HEK293 (cell line): ENCODE measurements at regions of chr10 and their contacts with region 1.

Region 1: GRCh38 chr10:58177362-58177947 is 90.2 kb downstream of the IPMK start:
- H3K4me3 ChIP-seq: no peak overlapping the region
- H3K27ac ChIP-seq: no peak overlapping the region
- H3K4me1 ChIP-seq: no peaks in the 10 kb centered on the region
- CTCF ChIP-seq: no peak; the same call in 1 of the 2 replicates

Region 2: DNA sequence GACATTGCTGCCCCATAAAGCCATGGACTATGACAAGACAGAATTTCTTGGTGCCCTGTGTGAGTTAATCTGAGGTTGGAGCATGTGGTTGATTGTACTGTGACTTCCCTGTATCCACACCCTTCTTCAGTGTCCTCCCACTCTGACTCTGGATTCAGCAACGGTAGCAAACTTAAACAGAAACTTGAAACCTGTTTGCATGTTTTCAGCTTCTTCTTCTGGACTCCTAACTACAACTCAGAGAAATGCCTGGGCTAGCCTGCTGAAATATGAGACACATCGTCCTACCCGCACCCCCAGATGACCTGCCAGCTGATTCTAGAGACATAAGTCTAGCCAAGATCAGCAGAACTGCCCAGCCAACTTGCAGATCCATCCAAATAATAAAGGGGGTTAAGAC is 11.8 kb after region 1 on chr10:
- CTCF ChIA-PET with region 1: interaction called, 10 read pairs
- POLR2A ChIA-PET with region 1: no interaction called
- H3K4me3 ChIP-seq: no peak overlapping the region
- H3K27ac ChIP-seq: no peak overlapping the region
- H3K4me1 ChIP-seq: peaks cover 2% of the 10 kb centered on the region; the same call in 1 of the 2 replicates
- CTCF ChIP-seq: no peak

Region 3: DNA sequence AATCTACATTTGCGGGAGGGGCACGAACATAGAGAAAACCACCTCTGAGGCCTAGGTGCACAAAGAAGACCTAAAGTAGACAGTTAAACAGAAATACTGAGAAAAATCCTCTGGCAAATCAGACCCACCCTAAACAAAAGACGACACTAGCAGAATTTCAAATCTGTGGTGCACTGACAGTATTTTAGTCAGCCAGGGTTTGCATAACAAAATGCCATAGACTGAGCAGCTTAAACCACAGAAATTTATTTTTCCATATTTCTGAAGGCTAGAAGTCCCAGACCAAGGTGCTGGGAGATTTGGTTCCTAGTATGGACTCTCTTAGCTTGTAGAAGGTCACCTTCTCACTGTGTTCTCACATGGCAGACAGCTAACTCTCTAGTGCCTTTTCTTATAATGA is 63.9 kb after region 1 on chr10:
- CTCF ChIA-PET with region 1: no interaction called
- POLR2A ChIA-PET with region 1: no interaction called
- H3K4me3 ChIP-seq: no peak overlapping the region
- H3K27ac ChIP-seq: no peak overlapping the region
- H3K4me1 ChIP-seq: no peaks in the 10 kb centered on the region; the same call in 1 of the 2 replicates
- CTCF ChIP-seq: no peak

Region 4: DNA sequence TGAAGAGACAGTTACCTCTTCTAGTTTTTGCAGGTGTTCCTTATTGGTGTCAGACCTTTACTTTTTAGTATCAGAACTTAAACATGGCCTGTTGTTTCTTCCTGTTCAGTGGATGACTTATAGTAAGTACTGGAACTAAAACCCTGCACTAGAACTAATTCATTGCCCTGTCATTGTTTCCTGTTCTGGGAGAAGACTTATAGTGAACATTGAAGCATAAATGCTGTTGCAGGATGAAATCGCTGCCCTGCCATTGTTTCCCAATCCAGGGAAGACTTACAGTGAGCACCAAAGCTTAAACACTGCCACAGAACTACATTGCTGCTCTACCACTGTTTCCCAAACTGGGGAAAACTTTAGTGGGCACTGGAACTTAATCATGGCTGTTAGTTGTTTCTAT is 77.2 kb after region 1 on chr10:
- CTCF ChIA-PET with region 1: no interaction called
- POLR2A ChIA-PET with region 1: no interaction called
- H3K4me3 ChIP-seq: no peak overlapping the region
- H3K27ac ChIP-seq: no peak overlapping the region
- H3K4me1 ChIP-seq: no peaks in the 10 kb centered on the region
- CTCF ChIP-seq: no peak

Region 5: DNA sequence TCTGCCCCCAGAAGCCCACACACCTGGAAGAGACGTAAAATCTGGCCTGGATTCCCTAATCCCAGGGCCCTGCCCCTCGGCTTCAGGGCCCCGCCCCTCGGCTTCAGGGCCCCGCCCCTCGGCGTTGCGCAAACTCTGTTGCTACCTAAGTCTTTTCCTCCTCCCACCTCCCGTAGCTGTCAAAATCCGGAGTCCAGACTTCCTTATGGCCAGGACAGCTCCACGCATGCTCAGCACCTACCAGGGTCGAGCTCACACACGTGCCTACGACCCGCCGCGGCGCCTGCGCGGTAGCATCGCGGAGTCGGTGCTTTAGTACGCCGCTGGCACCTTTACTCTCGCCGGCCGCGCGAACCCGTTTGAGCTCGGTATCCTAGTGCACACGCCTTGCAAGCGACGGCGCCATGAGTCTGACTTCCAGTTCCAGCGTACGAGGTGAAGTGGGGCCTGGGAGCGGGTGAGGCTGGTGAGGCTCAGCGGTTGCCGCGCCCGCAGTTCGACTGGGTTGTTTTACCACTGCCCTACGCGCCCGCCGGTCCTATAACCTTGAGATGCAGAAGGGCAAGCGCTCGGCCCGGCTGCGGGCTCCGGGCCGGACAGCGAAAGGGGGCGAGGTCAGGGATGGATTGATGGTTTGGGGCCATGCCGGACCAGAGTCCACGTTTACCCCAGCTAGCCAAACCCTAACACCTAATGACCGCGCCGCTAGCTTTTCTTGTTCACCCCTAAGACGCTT is 91.6 kb after region 1 on chr10 and contains the start of gene CISD1:
- CTCF ChIA-PET with region 1: interaction called, 10 read pairs
- POLR2A ChIA-PET with region 1: interaction called, 4 read pairs
- H3K4me3 ChIP-seq: peak within 1 kb of the TSS; percentile 64
- H3K27ac ChIP-seq: peak within 1 kb of the TSS; percentile 94
- H3K4me1 ChIP-seq: peaks cover 5% of the 10 kb centered on the region; the same call in 1 of the 2 replicates
- CTCF ChIP-seq: no peak

Region 6: DNA sequence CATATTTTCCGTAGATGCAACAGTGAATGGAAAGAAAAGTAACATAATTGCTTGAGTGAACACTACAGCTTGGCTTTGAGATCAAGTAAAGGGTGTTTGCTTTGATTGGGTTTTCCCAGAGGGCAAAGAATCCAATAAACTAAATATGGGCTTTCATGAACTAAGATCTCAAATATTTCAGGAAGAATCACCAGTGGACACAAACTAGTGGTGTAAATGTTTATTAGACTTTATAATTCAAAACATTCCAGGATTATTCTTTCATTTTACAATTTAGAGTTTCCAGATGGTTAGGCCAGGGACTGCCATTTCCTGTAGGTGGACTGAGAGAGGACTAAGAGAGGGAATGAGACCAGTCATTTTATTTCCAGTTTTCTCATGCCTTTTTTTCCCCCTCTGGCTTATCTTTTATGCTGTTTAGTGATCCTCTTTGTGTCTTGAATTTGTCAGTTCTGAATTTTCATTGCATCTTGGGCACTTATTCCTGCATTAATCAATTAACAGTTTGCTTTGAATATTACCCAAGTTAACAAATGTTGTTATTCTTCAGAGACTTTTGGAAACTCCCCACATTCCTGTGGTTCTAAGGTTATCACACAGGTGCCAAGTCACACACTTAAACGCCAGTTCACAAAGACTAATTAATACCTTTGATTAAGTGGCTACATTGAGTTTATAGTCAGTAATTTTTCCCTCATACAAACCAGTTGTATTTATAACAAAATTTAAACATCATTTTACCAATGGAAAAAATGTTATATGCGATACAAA is 103.7 kb after region 1 on chr10:
- CTCF ChIA-PET with region 1: interaction called, 10 read pairs
- POLR2A ChIA-PET with region 1: no interaction called
- H3K4me3 ChIP-seq: no peak overlapping the region
- H3K27ac ChIP-seq: no peak overlapping the region
- H3K4me1 ChIP-seq: no peaks in the 10 kb centered on the region
- CTCF ChIP-seq: no peak

Region 7: DNA sequence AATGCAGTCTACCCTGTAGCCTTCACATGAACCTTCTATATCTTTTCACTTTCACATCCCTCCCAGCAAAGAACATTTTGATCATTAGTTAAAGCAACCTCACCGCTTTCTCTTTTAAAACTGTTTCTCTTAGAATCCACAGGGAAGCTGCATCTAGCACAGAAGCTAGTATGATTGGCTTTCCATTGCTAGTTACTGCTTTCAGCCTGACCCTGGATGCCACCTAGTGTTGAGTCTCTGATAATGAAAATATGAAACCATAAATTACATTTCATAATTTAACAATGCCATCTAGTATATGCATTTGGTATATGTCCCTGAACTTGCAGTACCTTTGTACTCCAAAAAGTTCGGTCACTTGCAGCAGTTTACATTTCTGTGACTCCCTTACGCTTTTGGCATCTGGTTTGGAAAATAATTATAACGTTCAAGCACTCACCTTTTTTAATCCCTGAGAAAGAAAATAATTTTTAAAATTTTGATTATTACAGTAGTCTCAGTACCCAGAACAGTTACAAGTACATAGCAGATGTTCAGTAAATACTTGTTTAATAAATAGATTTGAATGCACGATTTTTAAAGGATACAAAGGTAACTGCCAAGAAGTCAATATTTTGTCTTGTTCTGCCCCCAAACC is 114.2 kb after region 1 on chr10:
- CTCF ChIA-PET with region 1: interaction called, 103 read pairs
- POLR2A ChIA-PET with region 1: no interaction called
- H3K4me3 ChIP-seq: no peak overlapping the region
- H3K27ac ChIP-seq: no peak overlapping the region
- H3K4me1 ChIP-seq: no peaks in the 10 kb centered on the region
- CTCF ChIP-seq: peak; percentile 58; the same call in 1 of the 2 replicates